Activated T-helper 2 cell treated with anti-CD3 and anti-CD28 coated beads, Interferon-gamma antibody, Interleukin-2, Interleukin-4, amounts not matched to agents 10 μg/mL and 5 μg/mL and 100 μg/mL, durations not matched to agents 14 hours and 24 hours and 36 hours (primary cell): ENCODE measurements at regions of chr2 and their contacts with region 1.

Region 1: DNA sequence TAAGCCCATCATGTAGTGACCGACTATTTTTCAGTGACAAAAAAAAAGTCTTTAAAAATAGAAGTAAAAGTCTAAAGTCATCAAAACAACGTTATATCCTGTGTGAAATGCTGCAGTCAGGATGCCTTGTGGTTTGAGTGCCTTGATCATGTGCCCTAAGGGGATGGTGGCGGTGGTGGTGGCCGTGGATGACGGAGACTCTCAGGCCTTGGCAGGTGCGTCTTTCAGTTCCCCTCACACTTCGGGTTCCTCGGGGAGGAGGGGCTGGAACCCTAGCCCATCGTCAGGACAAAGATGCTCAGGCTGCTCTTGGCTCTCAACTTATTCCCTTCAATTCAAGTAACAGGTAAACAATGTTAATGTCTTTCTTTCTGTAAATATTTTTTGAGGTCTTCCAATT is at the start of gene CD28:
- DNase-seq: peak; percentile 88
- H3K4me3 Mint-ChIP-seq: peak within 1 kb of the TSS; percentile 89
- H3K27ac Mint-ChIP-seq: peak within 1 kb of the TSS; percentile 100
- H3K4me1 Mint-ChIP-seq: peaks cover 57% of the 10 kb centered on the region
- H3K27me3 Mint-ChIP-seq: no peaks in the 10 kb centered on the region
- total RNA-seq, gene CD28: 53.6 and 59.3 TPM in 2 replicates

Region 2: GRCh38 chr2:203586696-203587095 is 119.7 kb before region 1 on chr2:
- intact Hi-C with region 1: no loop called
- DNase-seq: no peak
- H3K4me3 Mint-ChIP-seq: no peak overlapping the region
- H3K27ac Mint-ChIP-seq: no peak overlapping the region
- H3K4me1 Mint-ChIP-seq: peaks cover 37% of the 10 kb centered on the region
- H3K27me3 Mint-ChIP-seq: peaks cover 48% of the 10 kb centered on the region

Region 3: DNA sequence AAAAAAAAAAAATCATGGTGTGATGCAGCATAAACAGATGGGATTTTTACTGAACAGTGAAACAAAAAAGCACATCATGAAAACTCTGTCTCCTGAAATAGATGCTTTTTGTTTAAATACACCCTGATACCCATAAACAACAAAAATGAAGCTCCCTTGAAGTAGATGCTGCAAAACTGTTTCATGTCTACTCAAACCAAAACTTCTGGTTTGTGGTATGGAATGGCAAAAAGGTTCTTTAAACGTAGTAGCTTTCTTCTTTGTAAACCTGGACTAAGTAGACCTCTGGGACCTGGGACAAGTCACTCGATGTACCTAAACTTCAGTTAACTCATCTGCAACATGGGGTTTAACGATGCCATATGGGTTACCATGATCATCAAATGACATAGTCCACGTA is 106.9 kb before region 1 on chr2:
- intact Hi-C with region 1: loop called (anchors 5 kb)
- DNase-seq: no peak
- H3K4me3 Mint-ChIP-seq: no peak overlapping the region
- H3K27ac Mint-ChIP-seq: no peak overlapping the region
- H3K4me1 Mint-ChIP-seq: peaks cover 35% of the 10 kb centered on the region
- H3K27me3 Mint-ChIP-seq: peaks cover 51% of the 10 kb centered on the region

Region 4: GRCh38 chr2:203692031-203692710 is 14.2 kb before region 1 on chr2:
- intact Hi-C with region 1: loop called (anchors 1 kb)
- DNase-seq: no peak
- H3K4me3 Mint-ChIP-seq: no peak overlapping the region
- H3K27ac Mint-ChIP-seq: no peak overlapping the region
- H3K4me1 Mint-ChIP-seq: peaks cover 31% of the 10 kb centered on the region
- H3K27me3 Mint-ChIP-seq: no peaks in the 10 kb centered on the region

Region 5: GRCh38 chr2:203740780-203741281 is 34.4 kb after region 1 on chr2:
- intact Hi-C with region 1: loop called (anchors 1 kb)
- DNase-seq: peak; percentile 62
- H3K4me3 Mint-ChIP-seq: peak overlapping the region; percentile 62
- H3K27ac Mint-ChIP-seq: peak overlapping the region; percentile 99
- H3K4me1 Mint-ChIP-seq: peaks cover 81% of the 10 kb centered on the region
- H3K27me3 Mint-ChIP-seq: no peaks in the 10 kb centered on the region

Region 6: DNA sequence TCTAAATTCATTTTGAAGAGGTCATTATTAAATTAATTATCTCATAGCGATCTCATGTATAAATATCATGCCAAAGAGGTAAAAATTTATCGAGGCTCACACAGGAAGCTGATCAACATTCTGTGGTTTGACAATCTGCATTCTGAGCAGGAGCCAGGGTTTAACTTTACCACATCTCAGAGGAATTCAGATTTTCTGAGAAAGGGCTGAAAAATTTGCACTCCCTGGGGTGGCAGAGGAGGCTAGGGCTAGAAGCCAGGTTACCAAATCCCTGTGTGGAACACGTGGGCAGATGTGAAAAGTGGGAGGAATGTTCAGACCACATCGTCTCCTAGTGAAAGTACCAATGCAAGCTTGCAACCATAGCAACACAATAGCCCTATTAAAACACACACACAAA is 97.7 kb after region 1 on chr2:
- intact Hi-C with region 1: loop called (anchors 1 kb)
- DNase-seq: peak; percentile 36
- H3K4me3 Mint-ChIP-seq: no peak overlapping the region
- H3K27ac Mint-ChIP-seq: peak overlapping the region; percentile 61
- H3K4me1 Mint-ChIP-seq: peaks cover 68% of the 10 kb centered on the region
- H3K27me3 Mint-ChIP-seq: no peaks in the 10 kb centered on the region

Region 7: GRCh38 chr2:203893401-203893800 is 187.0 kb after region 1 on chr2:
- intact Hi-C with region 1: loop called (anchors 2 kb)
- DNase-seq: no peak
- H3K4me3 Mint-ChIP-seq: no peak overlapping the region
- H3K27ac Mint-ChIP-seq: peak overlapping the region; percentile 92
- H3K4me1 Mint-ChIP-seq: peaks cover 79% of the 10 kb centered on the region
- H3K27me3 Mint-ChIP-seq: no peaks in the 10 kb centered on the region